ENCODE measurements at regions of chr19 and their contacts with region 1.

Region 1: DNA sequence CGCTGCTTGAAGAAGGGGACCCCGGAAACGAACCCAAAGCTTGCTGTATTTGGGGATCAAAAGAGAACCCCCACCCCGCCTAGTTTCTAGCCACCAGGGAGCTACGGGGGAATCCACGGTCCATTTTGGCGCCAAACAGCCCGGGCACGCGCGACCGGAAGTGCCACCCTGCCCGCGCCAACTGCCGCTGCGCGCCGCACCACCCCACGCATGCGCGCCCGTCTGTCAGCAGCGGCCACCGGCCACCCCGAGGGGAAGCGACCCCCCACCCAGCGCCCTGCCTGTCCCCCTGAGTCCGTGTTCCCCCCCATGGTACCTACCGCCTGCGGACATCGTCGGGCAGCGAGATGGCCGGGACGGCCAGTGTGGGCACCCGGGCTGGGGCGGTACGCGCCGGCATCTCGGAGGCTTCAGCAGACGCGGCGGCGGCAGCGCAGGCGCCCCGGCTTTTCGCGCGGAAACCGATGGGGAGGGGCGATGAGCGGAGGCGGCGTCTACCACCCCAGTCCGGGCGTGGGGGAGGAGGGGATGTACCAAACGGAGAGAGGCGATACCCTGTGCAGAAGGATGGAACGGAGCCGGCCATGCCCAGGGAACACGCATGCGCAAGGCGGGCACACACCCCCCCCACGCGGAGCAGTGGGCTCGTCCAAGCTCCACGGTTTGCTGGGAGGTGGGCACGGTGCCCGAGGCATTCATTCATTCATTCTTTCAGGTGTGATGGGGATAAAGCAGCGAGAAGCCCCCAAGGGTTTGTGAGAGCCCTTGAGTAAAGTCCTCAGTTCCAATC is at the start of gene DNMT1:
- DNase-seq: peak; percentile 87 to 98 (median 93)
- ATAC-seq: peak; percentile 99
- H3K4me3 ChIP-seq: peak within 1 kb of the TSS; percentile 88
- H3K4me3 Mint-ChIP-seq: peak within 1 kb of the TSS; percentile 87 to 98 (median 95)
- H3K27ac ChIP-seq: peak within 1 kb of the TSS; percentile 81
- H3K27ac Mint-ChIP-seq: peak within 1 kb of the TSS; percentile 82 to 96 (median 92)
- H3K4me1 ChIP-seq: peaks cover 7 to 20% of the 10 kb centered on the region in 2 donors
- H3K4me1 Mint-ChIP-seq: peaks cover 14 to 48% (median 40%) of the 10 kb centered on the region in 7 donors
- H3K27me3 ChIP-seq: no peaks in the 10 kb centered on the region
- H3K27me3 Mint-ChIP-seq: no peaks in the 10 kb centered on the region
- total RNA-seq, gene DNMT1: 175 to 334 (median 194) TPM

Region 2: GRCh38 chr19:10120538-10121189 is 74.0 kb before region 1 on chr19:
- CTCF ChIA-PET with region 1: interaction called, 4 read pairs
- POLR2A ChIA-PET with region 1: no interaction called
- intact Hi-C with region 1: loop called in 1 of 2 experiments (anchors 1 kb)
- DNase-seq: no peak
- ATAC-seq: no peak
- H3K4me3 ChIP-seq: no peak overlapping the region
- H3K4me3 Mint-ChIP-seq: peak overlapping the region in 4 of 10 donors; percentile 15 to 42 (median 34)
- H3K27ac ChIP-seq: no peak overlapping the region
- H3K27ac Mint-ChIP-seq: no peak overlapping the region
- H3K4me1 ChIP-seq: peaks cover 10 to 25% of the 10 kb centered on the region in 2 donors
- H3K4me1 Mint-ChIP-seq: peaks cover 5 to 30% (median 15%) of the 10 kb centered on the region in 7 donors
- H3K27me3 ChIP-seq: no peaks in the 10 kb centered on the region
- H3K27me3 Mint-ChIP-seq: no peaks in the 10 kb centered on the region

Region 3: GRCh38 chr19:10152100-10152499 is 42.6 kb before region 1 on chr19:
- CTCF ChIA-PET with region 1: no interaction called
- POLR2A ChIA-PET with region 1: no interaction called
- intact Hi-C with region 1: no loop called
- DNase-seq: no peak
- ATAC-seq: no peak
- H3K4me3 ChIP-seq: no peak overlapping the region
- H3K4me3 Mint-ChIP-seq: no peak overlapping the region
- H3K27ac ChIP-seq: no peak overlapping the region
- H3K27ac Mint-ChIP-seq: peak overlapping the region in 4 of 9 donors; percentile 17 to 73 (median 44)
- H3K4me1 ChIP-seq: no peaks in the 10 kb centered on the region
- H3K4me1 Mint-ChIP-seq: peaks cover 0 to 2% (median 0%) of the 10 kb centered on the region in 7 donors
- H3K27me3 ChIP-seq: no peaks in the 10 kb centered on the region
- H3K27me3 Mint-ChIP-seq: no peaks in the 10 kb centered on the region

Region 4: GRCh38 chr19:10230861-10231611 is 36.3 kb after region 1 on chr19 and contains the start of gene S1PR2:
- CTCF ChIA-PET with region 1: interaction called, 3 read pairs
- POLR2A ChIA-PET with region 1: no interaction called
- intact Hi-C with region 1: loop called (anchors 1 to 2 kb)
- DNase-seq: peak; percentile 47 to 79 (median 56)
- ATAC-seq: peak; percentile 60
- H3K4me3 ChIP-seq: peak within 1 kb of the TSS; percentile 81
- H3K4me3 Mint-ChIP-seq: peak within 1 kb of the TSS; percentile 79 to 94 (median 88)
- H3K27ac ChIP-seq: peak within 1 kb of the TSS; percentile 94
- H3K27ac Mint-ChIP-seq: peak within 1 kb of the TSS; percentile 80 to 89 (median 83)
- H3K4me1 ChIP-seq: peaks cover 16 to 17% of the 10 kb centered on the region in 2 donors
- H3K4me1 Mint-ChIP-seq: peaks cover 7 to 37% (median 24%) of the 10 kb centered on the region in 7 donors
- H3K27me3 ChIP-seq: no peaks in the 10 kb centered on the region
- H3K27me3 Mint-ChIP-seq: no peaks in the 10 kb centered on the region
- total RNA-seq, gene S1PR2: 3.4 to 6.8 (median 5.2) TPM

Region 5: GRCh38 chr19:10380313-10381102 is 185.8 kb after region 1 on chr19 and contains the start of gene TYK2:
- CTCF ChIA-PET with region 1: no interaction called
- POLR2A ChIA-PET with region 1: interaction called, 3 read pairs
- intact Hi-C with region 1: loop called in 1 of 2 experiments (anchors 1 kb)
- DNase-seq: peak; percentile 94 to 99 (median 97)
- ATAC-seq: peak; percentile 98
- H3K4me3 ChIP-seq: peak within 1 kb of the TSS; percentile 94
- H3K4me3 Mint-ChIP-seq: peak within 1 kb of the TSS; percentile 93 to 99 (median 94)
- H3K27ac ChIP-seq: peak within 1 kb of the TSS; percentile 84
- H3K27ac Mint-ChIP-seq: peak within 1 kb of the TSS; percentile 88 to 97 (median 93)
- H3K4me1 ChIP-seq: peaks cover 5 to 10% of the 10 kb centered on the region in 2 donors
- H3K4me1 Mint-ChIP-seq: peaks cover 14 to 34% (median 23%) of the 10 kb centered on the region in 7 donors
- H3K27me3 ChIP-seq: no peaks in the 10 kb centered on the region
- H3K27me3 Mint-ChIP-seq: peaks cover 0 to 3% (median 0%) of the 10 kb centered on the region in 5 donors
- total RNA-seq, gene TYK2: 224 to 346 (median 284) TPM